HepG2 (cell line): ENCODE measurements at regions of chr12 and their contacts with region 1.

Region 1: DNA sequence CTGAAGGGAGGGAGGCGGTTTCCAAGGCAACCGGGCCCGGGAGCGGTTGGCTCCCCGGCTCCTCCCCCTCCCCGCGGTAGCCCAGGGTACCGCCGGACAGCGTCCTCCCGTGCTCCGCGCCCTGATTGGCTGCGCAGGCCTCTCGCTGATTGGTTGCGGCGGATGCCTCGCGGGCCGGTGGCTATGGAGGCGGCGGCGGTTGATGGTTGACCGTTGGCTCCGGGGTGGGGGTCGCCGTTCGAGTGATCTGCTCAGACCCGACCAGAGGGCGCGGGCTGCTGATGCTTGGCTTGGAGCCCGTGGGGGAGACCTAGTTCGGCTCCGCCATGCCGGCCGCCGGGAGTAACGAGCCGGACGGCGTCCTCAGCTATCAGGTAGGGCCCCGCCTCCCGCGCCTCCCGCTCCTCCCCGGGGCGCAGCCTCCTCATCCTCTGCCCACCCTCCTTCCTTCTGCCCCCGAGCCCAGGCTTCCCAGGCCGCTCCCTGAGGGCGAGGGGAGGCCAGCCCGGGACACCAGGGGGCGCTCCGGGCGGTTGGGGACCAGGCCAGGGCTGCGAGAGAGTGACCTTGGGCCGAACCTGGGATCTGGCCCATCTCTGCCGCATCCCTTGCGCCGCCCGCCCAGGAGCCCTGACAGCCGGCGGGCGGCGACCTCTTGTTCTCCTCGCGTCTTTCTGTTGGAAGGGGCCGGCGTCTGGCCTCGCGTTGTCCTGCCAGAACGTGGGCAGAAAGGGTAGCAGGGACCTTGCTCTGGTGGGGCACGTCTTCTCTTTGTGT is at the start of gene SLC4A8:
- DNase-seq: peak; percentile 54
- ATAC-seq: peak; percentile 96
- H3K4me3 ChIP-seq: peak within 1 kb of the TSS in 1 of 3 experiments; percentile 51; a peak in 1 of 6 replicates
- H3K27ac ChIP-seq: no peak within 1 kb of the TSS
- H3K4me1 ChIP-seq: peaks cover 1% of the 10 kb centered on the region; the same call in 1 of the 2 replicates
- H3K27me3 ChIP-seq: peaks cover 0 to 8% of the 10 kb centered on the region in 2 experiments; a peak in 2 of 5 replicates
- CTCF ChIP-seq: peak; percentile 85
- EP300 ChIP-seq: no peak
- POLR2A ChIP-seq: no peak
- RAD21 ChIP-seq: peak; percentile 75
- total RNA-seq, gene SLC4A8: 0.07 TPM in 1 of 2 replicates, not detected in the other

Region 2: DNA sequence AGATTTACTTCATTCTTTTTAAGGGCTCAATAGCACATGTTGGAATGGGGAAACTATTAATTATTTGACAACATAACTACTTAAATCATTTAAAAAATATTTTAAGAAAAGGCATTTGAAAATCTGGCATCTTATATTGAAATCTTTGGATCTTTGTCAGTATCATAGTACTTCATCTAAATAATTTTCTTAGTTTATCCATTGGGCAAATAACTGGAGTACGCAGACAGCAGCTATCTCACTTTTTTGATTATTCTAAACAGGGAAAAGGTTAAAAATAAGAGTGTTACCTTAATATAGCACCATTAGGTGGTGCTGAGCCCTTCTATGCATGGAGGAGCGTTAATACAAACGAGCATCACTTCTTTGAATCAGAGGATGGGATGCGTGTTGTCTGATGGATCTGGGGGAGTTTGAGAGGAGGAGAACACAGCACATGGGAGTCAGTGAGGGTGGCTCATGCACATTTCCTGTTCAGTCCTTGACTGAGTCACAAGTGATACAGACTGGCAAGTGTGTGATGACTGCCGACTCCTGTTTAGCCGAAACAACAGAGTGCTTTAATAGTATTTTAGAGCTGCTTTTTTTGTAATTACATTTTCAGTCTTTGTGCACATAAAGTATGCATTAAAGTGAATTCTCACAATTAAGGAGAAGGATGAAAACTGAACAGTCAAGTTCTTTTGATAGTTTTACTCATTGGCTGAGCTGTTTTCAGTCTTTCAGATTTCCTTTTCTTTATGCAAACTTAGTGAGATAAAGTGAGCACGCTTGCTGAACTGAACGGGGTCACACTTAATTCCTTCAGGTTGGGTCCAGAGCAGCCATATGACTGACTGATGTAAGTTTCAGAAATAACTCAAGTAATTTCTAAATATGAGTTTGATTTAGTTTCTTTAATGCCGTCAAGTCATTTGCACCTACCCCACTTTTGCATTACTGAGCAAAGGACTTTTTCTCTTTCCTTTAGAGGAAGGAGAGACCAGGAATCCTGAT is 827.4 kb before region 1 on chr12:
- CTCF ChIA-PET with region 1: no interaction called
- POLR2A ChIA-PET with region 1: no interaction called
- in situ Hi-C with region 1: no loop called
- intact Hi-C with region 1: no loop called
- DNase-seq: no peak
- ATAC-seq: no peak; the same call in 2 of the 3 replicates
- H3K4me3 ChIP-seq: no peak overlapping the region
- H3K27ac ChIP-seq: no peak overlapping the region
- H3K4me1 ChIP-seq: peaks cover 27% of the 10 kb centered on the region
- H3K27me3 ChIP-seq: no peaks in the 10 kb centered on the region
- CTCF ChIP-seq: no peak
- EP300 ChIP-seq: no peak
- POLR2A ChIP-seq: no peak
- RAD21 ChIP-seq: no peak

Region 3: DNA sequence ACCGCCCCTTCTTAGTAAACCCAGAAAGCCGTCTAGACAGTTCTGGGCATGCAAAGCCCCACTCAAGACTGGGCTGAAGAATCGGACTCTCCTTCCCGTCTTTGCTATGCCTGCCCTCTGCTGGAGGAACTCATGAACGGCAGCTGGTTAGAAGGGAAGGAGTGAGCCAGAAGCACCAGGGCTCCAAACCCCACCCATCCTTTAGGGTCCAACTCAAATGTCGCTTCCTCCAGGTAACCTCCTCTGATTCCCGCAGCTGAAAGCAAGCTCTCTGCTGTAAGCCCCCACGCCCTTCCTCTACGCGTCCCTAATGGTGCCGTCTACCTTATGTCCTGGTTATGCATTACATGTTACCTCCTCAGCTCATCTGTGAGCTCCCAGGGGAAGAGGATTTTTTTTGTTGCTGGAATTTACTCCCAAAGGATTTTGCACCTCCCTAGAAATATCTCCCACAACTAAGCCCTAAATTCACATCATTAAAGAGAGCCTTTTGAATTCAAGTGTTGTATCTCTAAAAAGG is 107.2 kb after region 1 on chr12:
- CTCF ChIA-PET with region 1: interaction called, 39 read pairs
- POLR2A ChIA-PET with region 1: no interaction called
- in situ Hi-C with region 1: loop called (anchors 5 kb)
- intact Hi-C with region 1: loop called (anchors 1 kb)
- DNase-seq: peak; percentile 43
- ATAC-seq: peak; percentile 92
- H3K4me3 ChIP-seq: no peak overlapping the region
- H3K27ac ChIP-seq: no peak overlapping the region
- H3K4me1 ChIP-seq: no peaks in the 10 kb centered on the region; the same call in 1 of the 2 replicates
- H3K27me3 ChIP-seq: peaks cover 0 to 15% of the 10 kb centered on the region in 2 experiments; a peak in 2 of 5 replicates
- CTCF ChIP-seq: peak; percentile 91
- EP300 ChIP-seq: no peak
- POLR2A ChIP-seq: no peak
- RAD21 ChIP-seq: peak; percentile 59

Region 4: DNA sequence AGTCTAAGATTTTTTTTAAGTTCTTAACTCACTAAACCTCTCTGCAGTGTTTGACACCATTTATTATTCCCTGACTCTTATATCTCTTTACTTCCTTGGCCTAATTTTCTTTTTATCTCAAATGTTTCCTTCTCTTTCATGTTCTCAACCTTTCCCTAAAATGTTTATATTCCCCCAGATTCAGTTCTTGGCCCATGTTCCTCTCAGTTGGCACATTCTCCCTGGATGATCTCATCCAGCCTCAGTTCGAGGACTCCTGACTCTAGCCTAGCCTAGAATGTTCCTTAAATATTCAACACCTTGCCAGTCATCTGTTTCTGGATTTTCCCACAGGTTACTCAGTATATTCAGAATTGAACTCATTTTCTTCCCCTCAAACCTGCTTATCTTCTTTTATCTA is 247.5 kb after region 1 on chr12:
- CTCF ChIA-PET with region 1: no interaction called
- POLR2A ChIA-PET with region 1: no interaction called
- in situ Hi-C with region 1: loop called (anchors 5 kb)
- intact Hi-C with region 1: no loop called
- DNase-seq: no peak
- ATAC-seq: no peak
- H3K4me3 ChIP-seq: no peak overlapping the region
- H3K27ac ChIP-seq: no peak overlapping the region
- H3K4me1 ChIP-seq: no peaks in the 10 kb centered on the region
- H3K27me3 ChIP-seq: no peaks in the 10 kb centered on the region
- CTCF ChIP-seq: no peak
- EP300 ChIP-seq: no peak
- POLR2A ChIP-seq: no peak
- RAD21 ChIP-seq: no peak

Region 5: GRCh38 chr12:51678086-51678724 is 253.4 kb after region 1 on chr12:
- CTCF ChIA-PET with region 1: interaction called, 9 read pairs
- POLR2A ChIA-PET with region 1: no interaction called
- in situ Hi-C with region 1: loop called (anchors 5 kb)
- intact Hi-C with region 1: loop called (anchors 1 kb)
- DNase-seq: peak; percentile 50
- ATAC-seq: peak; percentile 89
- H3K4me3 ChIP-seq: no peak overlapping the region
- H3K27ac ChIP-seq: no peak overlapping the region
- H3K4me1 ChIP-seq: no peaks in the 10 kb centered on the region
- H3K27me3 ChIP-seq: no peaks in the 10 kb centered on the region
- CTCF ChIP-seq: peak; percentile 80
- EP300 ChIP-seq: no peak
- POLR2A ChIP-seq: no peak
- RAD21 ChIP-seq: peak; percentile 63

Region 6: GRCh38 chr12:51814311-51815088 is 389.6 kb after region 1 on chr12:
- CTCF ChIA-PET with region 1: no interaction called
- POLR2A ChIA-PET with region 1: no interaction called
- in situ Hi-C with region 1: loop called (anchors 5 kb)
- intact Hi-C with region 1: loop called (anchors 5 kb)
- DNase-seq: peak; percentile 62
- ATAC-seq: peak; percentile 91
- H3K4me3 ChIP-seq: peak overlapping the region; percentile 65 to 83 (median 74)
- H3K27ac ChIP-seq: no peak overlapping the region
- H3K4me1 ChIP-seq: peaks cover 11% of the 10 kb centered on the region; the same call in 1 of the 2 replicates
- H3K27me3 ChIP-seq: 0 out of 5 replicates have a peak, but pooled peaks cover 1 to 4% of the 10 kb centered on the region in 2 experiments
- CTCF ChIP-seq: peak; percentile 76
- EP300 ChIP-seq: 0 out of 4 replicates have a peak, but pooled peaks of 1 of the 2 experiments have one; percentile 6
- POLR2A ChIP-seq: peak; percentile 36 to 76; a peak in 2 of 4 replicates
- RAD21 ChIP-seq: peak; percentile 93

Region 7: DNA sequence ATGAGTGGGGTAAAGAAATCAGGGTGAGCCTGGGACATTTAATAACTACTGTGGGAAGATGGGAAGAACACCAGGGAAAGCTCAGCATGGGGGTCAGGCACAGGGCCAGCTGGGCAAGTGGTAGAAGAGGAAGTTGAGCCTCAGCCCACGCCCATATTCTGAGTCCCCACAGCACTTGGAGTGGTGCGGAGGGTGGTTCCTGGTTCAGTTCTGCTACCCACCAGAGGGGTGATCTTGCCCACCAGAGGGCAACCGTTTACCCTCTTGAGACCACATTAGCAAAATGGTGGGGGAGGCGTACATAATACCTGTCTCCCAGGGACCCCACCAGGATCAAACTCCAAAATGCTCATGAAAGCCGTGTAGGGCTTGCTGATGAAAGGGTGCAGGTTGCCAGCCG is 446.3 kb after region 1 on chr12:
- CTCF ChIA-PET with region 1: interaction called, 3 read pairs
- POLR2A ChIA-PET with region 1: no interaction called
- in situ Hi-C with region 1: no loop called
- intact Hi-C with region 1: loop called (anchors 1 kb)
- DNase-seq: no peak
- ATAC-seq: no peak
- H3K4me3 ChIP-seq: no peak overlapping the region
- H3K27ac ChIP-seq: no peak overlapping the region
- H3K4me1 ChIP-seq: peaks cover 35% of the 10 kb centered on the region
- H3K27me3 ChIP-seq: peaks cover 9 to 44% of the 10 kb centered on the region in 2 experiments; a peak in 4 of 5 replicates
- CTCF ChIP-seq: no peak
- EP300 ChIP-seq: no peak
- POLR2A ChIP-seq: no peak
- RAD21 ChIP-seq: no peak